ENCODE measurements at regions of chr1 and their contacts with region 1.

Region 1: GRCh38 chr1:151001602-151002001 is 5.1 kb downstream of the MINDY1 start:
- DNase-seq: no peak
- ATAC-seq: no peak

Region 2: GRCh38 chr1:150765296-150765976 is 236.2 kb before region 1 on chr1 and contains the start of gene CTSS:
- intact Hi-C with region 1: no loop called
- DNase-seq: no peak
- ATAC-seq: peak; percentile 90
- total RNA-seq, gene CTSS: 576 to 638 TPM

Region 3: DNA sequence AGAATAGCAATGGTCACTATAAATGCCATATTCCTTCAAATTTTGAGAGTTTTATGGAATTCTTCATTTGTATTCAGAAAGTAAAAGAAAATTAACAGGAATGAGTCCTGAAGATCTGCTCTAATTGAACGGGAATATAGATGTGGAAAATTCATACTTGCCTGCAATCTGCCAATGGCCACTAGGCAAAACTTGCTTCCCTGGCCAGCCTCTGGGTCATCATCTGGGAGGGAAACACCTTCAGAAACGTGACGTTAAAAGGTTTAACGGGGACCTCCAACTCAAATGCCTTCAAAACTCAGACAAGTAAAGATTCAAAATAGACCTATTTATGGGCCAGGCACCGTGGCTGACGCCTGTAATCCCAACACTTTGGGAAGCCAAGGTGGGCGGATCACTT is 171.9 kb before region 1 on chr1:
- intact Hi-C with region 1: loop called in 1 of 2 experiments (anchors 5 kb)
- DNase-seq: no peak
- ATAC-seq: no peak

Region 4: GRCh38 chr1:151443846-151444782 is 442.5 kb after region 1 on chr1:
- intact Hi-C with region 1: no loop called
- DNase-seq: peak; percentile 44 to 71
- ATAC-seq: peak; percentile 97

Measured in left colon (tissue), 2 donors.